ENCODE measurements at regions of chr21 and their contacts with region 1.

Region 1: DNA sequence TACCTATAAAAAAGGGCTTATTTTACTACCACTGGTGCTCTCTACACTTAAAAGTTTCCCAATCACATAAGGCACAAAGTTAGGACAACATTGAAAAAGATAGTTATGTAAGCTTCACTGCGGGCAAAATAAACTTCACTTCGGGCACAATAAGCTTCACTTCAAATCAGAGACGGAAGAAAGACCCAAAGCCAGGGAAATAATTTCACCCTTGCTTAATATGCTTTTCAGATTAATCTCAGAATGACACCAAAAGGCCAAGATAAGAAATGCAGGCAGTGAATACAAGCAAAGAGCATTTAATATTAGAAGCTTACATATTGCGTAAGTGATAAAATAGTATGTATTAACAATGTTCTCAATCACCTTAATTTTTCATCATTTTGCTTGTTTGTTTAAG is 444.2 kb downstream of the SETD4 start:
- DNase-seq: peak in 3 of 14 experiments; percentile 14 to 32 (median 26)
- ATAC-seq: no peak
- H3K4me3 ChIP-seq: no peak overlapping the region
- H3K4me3 Mint-ChIP-seq: no peak overlapping the region
- H3K27ac ChIP-seq: no peak overlapping the region
- H3K27ac Mint-ChIP-seq: no peak overlapping the region
- H3K4me1 ChIP-seq: no peaks in the 10 kb centered on the region
- H3K4me1 Mint-ChIP-seq: peaks cover 4% of the 10 kb centered on the region
- H3K27me3 ChIP-seq: no peaks in the 10 kb centered on the region
- H3K27me3 Mint-ChIP-seq: no peaks in the 10 kb centered on the region
- CTCF ChIP-seq: peak; percentile 24

Region 2: GRCh38 chr21:34807146-34807880 is 808.8 kb before region 1 on chr21:
- CTCF ChIA-PET with region 1: no interaction called
- POLR2A ChIA-PET with region 1: no interaction called
- intact Hi-C with region 1: loop called in 1 of 2 experiments (anchors 10 kb)
- DNase-seq: peak in 13 of 14 experiments; percentile 23 to 82 (median 52)
- ATAC-seq: peak; percentile 83
- H3K4me3 ChIP-seq: no peak overlapping the region
- H3K4me3 Mint-ChIP-seq: peak overlapping the region; percentile 17
- H3K27ac ChIP-seq: peak overlapping the region; percentile 54 to 67
- H3K27ac Mint-ChIP-seq: peak overlapping the region; percentile 94
- H3K4me1 ChIP-seq: peaks cover 51% of the 10 kb centered on the region
- H3K4me1 Mint-ChIP-seq: peaks cover 74% of the 10 kb centered on the region
- H3K27me3 ChIP-seq: no peaks in the 10 kb centered on the region
- H3K27me3 Mint-ChIP-seq: no peaks in the 10 kb centered on the region
- CTCF ChIP-seq: no peak

Region 3: GRCh38 chr21:35438643-35439404 is 177.3 kb before region 1 on chr21:
- CTCF ChIA-PET with region 1: no interaction called
- POLR2A ChIA-PET with region 1: no interaction called
- intact Hi-C with region 1: loop called in 1 of 2 experiments (anchors 10 kb)
- DNase-seq: peak in 6 of 14 experiments; percentile 1 to 43 (median 12)
- ATAC-seq: peak; percentile 68
- H3K4me3 ChIP-seq: no peak overlapping the region
- H3K4me3 Mint-ChIP-seq: peak overlapping the region; percentile 42
- H3K27ac ChIP-seq: no peak overlapping the region
- H3K27ac Mint-ChIP-seq: peak overlapping the region; percentile 73
- H3K4me1 ChIP-seq: peaks cover 5% of the 10 kb centered on the region
- H3K4me1 Mint-ChIP-seq: peaks cover 34% of the 10 kb centered on the region
- H3K27me3 ChIP-seq: peaks cover 0 to 2% of the 10 kb centered on the region in 2 experiments
- H3K27me3 Mint-ChIP-seq: no peaks in the 10 kb centered on the region
- CTCF ChIP-seq: no peak

Measured in CD4-positive, alpha-beta T cell (primary cell).